Posterior vena cava (tissue), 2 donors: ENCODE measurements at regions of chr16 and their contacts with region 1.

Region 1: GRCh38 chr16:13573903-13574302 is 346.1 kb upstream of the ERCC4 start:
- DNase-seq: no peak

Region 2: GRCh38 chr16:13594823-13595222 is 20.9 kb after region 1 on chr16:
- intact Hi-C with region 1: loop called in 1 of 2 experiments (anchors 1 kb)
- DNase-seq: no peak